ENCODE measurements at regions of chr7 and their contacts with region 1.

Region 1: GRCh38 chr7:70881167-70881847 is 250.6 kb upstream of the GALNT17 start:
- DNase-seq: no peak
- ATAC-seq: no peak
- H3K4me3 ChIP-seq: no peak overlapping the region
- H3K27ac ChIP-seq: no peak overlapping the region
- H3K4me1 ChIP-seq: no peaks in the 10 kb centered on the region
- H3K27me3 ChIP-seq: peaks cover 0 to 11% (median 0%) of the 10 kb centered on the region in 7 donors
- CTCF ChIP-seq: no peak

Region 2: DNA sequence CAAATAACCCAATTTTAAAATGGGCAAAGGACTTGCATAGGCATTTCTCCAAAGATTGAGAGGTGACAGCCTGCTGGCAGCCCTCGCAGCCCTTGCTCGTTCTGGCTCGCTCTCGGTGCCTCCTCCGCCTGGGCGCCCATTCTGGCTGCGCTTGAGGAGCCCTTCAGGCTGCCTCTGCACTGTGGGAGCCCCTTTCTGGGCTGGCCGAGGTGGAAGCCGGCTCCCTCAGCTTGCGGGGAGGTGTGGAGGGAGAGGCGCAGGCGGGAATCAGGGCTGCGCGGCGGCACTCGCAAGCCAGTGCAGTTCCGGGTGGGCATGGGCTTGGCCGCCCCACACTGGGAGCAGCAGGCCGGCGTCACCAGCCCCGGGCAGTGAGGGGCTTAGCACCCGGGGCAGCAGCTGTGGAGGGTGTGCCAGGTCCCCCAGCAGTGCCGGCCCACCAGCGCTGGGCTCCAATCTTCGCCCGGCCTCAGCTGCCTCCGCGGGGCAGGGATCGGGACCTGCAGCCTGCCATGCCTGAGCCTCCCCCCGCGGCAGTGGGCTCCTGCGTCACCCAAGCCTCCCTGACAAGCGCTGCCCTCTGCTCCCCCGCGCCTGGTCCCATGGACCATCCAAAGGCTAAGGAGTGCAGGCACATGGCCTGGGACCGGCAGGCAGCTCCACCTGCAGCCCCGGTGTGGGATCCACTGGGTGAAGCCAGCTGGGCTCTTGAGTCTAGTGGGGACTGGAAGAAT is 196.6 kb after region 1 on chr7:
- intact Hi-C with region 1: loop called in 1 of 10 experiments (anchors 10 kb)
- DNase-seq: no peak
- ATAC-seq: peak in 1 of 8 donors; percentile 25
- H3K4me3 ChIP-seq: no peak overlapping the region
- H3K27ac ChIP-seq: no peak overlapping the region
- H3K4me1 ChIP-seq: no peaks in the 10 kb centered on the region
- H3K27me3 ChIP-seq: no peaks in the 10 kb centered on the region
- CTCF ChIP-seq: no peak